ENCODE measurements at regions of chr4 and their contacts with region 1.

Region 1: DNA sequence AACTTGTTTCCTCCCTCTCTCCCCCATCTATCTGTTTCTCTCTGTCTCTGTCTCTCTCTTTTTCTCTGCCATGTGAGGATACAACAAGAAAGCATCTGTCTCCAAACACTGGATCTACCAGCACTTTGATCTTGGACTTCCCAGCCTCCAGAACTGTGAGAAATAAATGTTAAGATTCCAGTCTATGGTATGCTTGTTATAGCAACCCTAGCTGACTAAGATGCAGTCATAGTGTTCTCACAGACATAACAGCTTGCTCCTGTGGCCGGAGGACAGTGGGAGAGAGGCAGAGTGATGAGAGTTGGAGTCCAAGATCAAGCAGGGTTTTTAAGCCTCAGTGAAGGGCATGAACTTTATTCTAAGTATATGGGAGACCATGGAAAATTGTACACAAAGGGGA is 8.8 kb upstream of the NKX3-2 start:
- DNase-seq: no peak
- ATAC-seq: no peak
- H3K4me3 ChIP-seq: no peak overlapping the region
- H3K27ac ChIP-seq: no peak overlapping the region
- H3K4me1 ChIP-seq: peaks cover 4% of the 10 kb centered on the region
- H3K27me3 ChIP-seq: peaks cover 51% of the 10 kb centered on the region
- CTCF ChIP-seq: no peak

Region 2: GRCh38 chr4:12724510-12724909 is 828.6 kb before region 1 on chr4:
- intact Hi-C with region 1: loop called (anchors 5 kb)
- DNase-seq: no peak
- ATAC-seq: no peak
- H3K4me3 ChIP-seq: no peak overlapping the region
- H3K27ac ChIP-seq: no peak overlapping the region
- H3K4me1 ChIP-seq: no peaks in the 10 kb centered on the region
- H3K27me3 ChIP-seq: no peaks in the 10 kb centered on the region
- CTCF ChIP-seq: peak; percentile 51

Region 3: DNA sequence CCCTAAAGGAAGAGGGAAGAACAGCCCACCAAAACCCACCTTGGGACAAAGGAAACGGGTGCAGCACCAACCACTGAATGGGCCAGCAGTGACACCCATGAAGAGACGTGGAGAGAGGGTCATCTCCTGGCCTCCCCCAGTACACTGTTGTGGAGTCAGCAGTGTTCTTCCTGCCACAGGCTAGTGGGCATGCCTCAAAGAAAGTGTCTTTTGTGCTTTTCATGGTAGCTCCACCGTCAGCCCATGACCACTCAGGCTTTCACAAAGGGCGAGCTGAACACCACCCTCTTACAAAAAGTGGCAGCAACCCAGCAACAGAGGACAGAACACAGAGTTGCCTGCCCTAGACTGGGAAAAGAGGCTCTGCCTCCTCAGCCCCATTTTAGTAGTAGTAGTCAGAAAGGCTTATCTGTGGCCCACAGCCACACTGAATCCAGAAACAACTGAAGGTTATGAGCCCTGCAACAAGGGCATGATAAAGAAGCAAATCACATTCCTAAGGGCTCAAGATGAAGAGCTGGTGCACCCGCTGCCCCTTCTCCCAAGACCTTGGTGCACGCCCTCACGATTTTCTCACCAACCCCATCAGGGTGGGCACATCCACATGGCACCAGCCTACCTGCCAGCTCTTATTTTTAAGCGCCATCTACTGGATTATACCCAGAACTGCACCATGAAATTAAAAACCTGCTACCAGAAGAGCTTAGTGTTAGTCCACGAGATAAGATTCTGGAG is 122.1 kb before region 1 on chr4:
- intact Hi-C with region 1: no loop called
- DNase-seq: no peak
- ATAC-seq: no peak
- H3K4me3 ChIP-seq: no peak overlapping the region
- H3K27ac ChIP-seq: no peak overlapping the region
- H3K4me1 ChIP-seq: peaks cover 10% of the 10 kb centered on the region
- H3K27me3 ChIP-seq: no peaks in the 10 kb centered on the region
- CTCF ChIP-seq: peak; percentile 12

Region 4: DNA sequence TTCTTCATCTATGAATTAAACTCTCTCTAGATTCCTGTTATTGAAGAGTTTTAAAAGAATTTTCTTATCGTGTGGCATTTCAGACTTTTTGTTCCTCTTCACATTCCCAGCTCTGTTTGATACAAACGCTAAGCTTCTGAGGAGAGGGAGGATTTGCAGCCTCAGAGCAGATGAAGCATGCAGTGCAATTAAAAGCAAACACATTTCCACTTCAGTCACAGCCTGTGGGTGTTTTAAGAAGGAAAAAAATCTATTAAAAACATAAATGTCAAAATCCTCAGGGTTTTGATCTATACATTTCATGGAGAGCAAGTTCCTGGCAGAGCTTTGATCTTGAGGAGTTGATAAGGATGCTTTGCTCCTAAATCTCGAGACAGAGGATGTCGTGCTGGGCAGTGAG is 516.8 kb after region 1 on chr4:
- intact Hi-C with region 1: no loop called
- DNase-seq: no peak
- ATAC-seq: no peak
- H3K4me3 ChIP-seq: no peak overlapping the region
- H3K27ac ChIP-seq: no peak overlapping the region
- H3K4me1 ChIP-seq: no peaks in the 10 kb centered on the region
- H3K27me3 ChIP-seq: no peaks in the 10 kb centered on the region
- CTCF ChIP-seq: no peak